Keratinocyte (primary cell): ENCODE measurements at regions of chr5 and their contacts with region 1.

Region 1: GRCh38 chr5:133779828-133780475 is 167.6 kb upstream of the FSTL4 start:
- DNase-seq: no peak
- H3K4me3 ChIP-seq: no peak overlapping the region
- H3K27ac ChIP-seq: no peak overlapping the region
- H3K4me1 ChIP-seq: no peaks in the 10 kb centered on the region
- H3K27me3 ChIP-seq: peaks cover 6% of the 10 kb centered on the region
- CTCF ChIP-seq: peak in 2 of 3 experiments; percentile 16 to 49

Region 2: DNA sequence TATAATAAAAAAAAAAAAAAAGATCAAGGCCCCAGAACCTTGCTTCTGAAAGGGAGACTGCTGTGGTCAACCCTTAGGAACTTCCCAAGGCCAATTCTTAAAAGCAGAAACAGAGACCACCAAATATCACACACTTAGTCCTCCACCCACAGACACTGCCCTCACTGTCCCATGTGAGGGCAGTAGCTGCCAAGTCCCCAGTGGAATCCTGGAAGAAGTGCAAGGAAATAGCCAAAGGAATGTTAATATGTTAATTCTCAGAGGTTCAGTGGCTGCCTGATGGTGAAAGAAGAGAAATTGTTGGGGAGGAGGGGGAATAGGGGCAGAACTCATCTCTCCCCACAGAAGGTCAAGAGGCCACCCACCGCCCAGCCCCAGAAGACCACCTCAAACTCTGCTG is 190.7 kb before region 1 on chr5:
- dilution Hi-C with region 1: loop called (anchors 25 kb)
- DNase-seq: no peak
- H3K4me3 ChIP-seq: no peak overlapping the region
- H3K27ac ChIP-seq: no peak overlapping the region
- H3K4me1 ChIP-seq: no peaks in the 10 kb centered on the region
- H3K27me3 ChIP-seq: peaks cover 4% of the 10 kb centered on the region
- CTCF ChIP-seq: peak in 2 of 3 experiments; percentile 12 to 25

Region 3: GRCh38 chr5:134026521-134027268 is 246.7 kb after region 1 on chr5:
- dilution Hi-C with region 1: no loop called
- DNase-seq: no peak
- H3K4me3 ChIP-seq: no peak overlapping the region
- H3K27ac ChIP-seq: no peak overlapping the region
- H3K4me1 ChIP-seq: peaks cover 16% of the 10 kb centered on the region
- H3K27me3 ChIP-seq: no peaks in the 10 kb centered on the region
- CTCF ChIP-seq: peak; percentile 87 to 97 (median 92)